Activated T-helper 1 cell treated with anti-CD3 and anti-CD28 coated beads, Interleukin-12 subunit alpha, Interleukin-12 subunit beta, Interleukin-2, Interleukin-4 antibody, amounts not matched to agents 30 ng/mL and 10 ng/mL and 1 ng/mL, durations not matched to agents 14 hours and 24 hours and 36 hours (primary cell): ENCODE measurements at regions of chr14 and their contacts with region 1.

Region 1: DNA sequence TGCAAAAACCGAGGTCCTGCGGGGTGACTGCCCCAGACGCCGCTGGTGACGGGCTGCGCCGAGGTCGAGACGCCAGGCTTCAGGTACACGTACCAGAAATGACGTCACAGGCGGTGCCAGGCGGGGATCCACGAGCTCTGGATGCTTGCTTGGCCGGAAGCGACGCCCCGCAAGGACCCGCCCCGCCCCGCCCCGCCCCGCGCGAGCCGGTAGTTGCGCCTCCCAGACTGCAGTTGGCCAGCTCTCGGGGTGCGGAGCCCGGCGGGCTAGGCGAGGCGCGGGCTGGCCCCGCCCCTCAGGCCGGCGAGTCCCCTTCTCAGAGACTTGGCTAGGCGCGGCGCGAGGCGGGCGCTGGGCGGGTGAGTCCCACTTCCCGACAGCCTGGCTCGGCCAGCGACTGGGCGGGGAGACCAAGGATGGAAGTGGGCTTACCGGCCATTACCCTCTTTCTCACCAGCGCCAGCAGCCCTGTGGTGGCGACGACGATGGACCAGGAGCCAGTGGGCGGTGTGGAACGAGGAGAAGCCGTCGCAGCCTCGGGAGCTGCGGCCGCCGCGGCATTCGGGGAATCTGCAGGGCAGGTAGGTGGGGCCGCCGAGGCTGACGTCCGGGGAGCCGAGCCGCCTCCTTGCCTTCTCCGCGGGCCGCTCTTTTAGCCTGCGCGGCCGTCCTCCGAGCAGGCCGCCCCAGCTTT is at the start of gene FAM177A1:
- DNase-seq: peak; percentile 96
- H3K4me3 Mint-ChIP-seq: peak within 1 kb of the TSS; percentile 97
- H3K27ac Mint-ChIP-seq: peak within 1 kb of the TSS; percentile 99
- H3K4me1 Mint-ChIP-seq: peaks cover 32% of the 10 kb centered on the region
- H3K27me3 Mint-ChIP-seq: no peaks in the 10 kb centered on the region
- total RNA-seq, gene FAM177A1: 43.2 and 46.3 TPM in 2 replicates

Region 2: DNA sequence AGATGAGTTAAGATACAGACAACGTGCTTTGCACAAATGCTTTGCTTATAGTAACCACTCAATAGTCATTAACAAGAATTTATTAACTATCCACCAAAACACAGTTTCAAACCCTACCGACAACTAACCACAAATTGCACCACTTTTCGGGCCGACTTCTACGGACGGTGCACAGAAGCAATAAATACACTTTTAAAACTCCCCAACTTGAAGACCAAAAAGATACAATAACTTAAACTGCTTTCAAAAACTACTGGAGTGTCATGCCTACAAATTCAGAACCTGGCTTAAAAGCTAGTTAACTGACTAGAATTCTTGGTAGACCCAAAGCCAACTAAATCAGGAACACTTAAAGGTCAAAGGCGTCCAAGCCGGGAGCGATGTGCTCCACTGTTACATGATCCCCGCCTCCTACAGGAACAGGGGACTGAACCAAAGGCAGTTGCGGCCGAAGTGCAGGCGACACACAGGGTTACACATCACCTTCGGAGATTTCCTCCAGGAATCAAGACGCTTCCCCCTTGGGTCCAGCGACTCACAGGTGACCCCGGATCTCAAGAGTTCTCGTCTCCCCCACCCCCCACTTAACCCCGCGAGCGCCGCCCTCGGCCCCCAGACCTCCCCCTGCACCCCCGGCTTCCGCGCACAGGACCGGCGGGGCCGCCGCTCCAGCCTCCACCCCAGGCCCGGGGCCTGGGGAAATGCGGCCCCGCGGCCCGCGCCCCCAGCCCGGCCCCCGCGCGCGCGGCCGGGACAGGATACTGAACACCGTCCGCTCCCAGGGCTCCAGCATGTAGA is 584.7 kb before region 1 on chr14:
- intact Hi-C with region 1: loop called (anchors 1 kb)
- DNase-seq: no peak
- H3K4me3 Mint-ChIP-seq: peak overlapping the region; percentile 90
- H3K27ac Mint-ChIP-seq: peak overlapping the region; percentile 91
- H3K4me1 Mint-ChIP-seq: peaks cover 28% of the 10 kb centered on the region
- H3K27me3 Mint-ChIP-seq: no peaks in the 10 kb centered on the region

Region 3: DNA sequence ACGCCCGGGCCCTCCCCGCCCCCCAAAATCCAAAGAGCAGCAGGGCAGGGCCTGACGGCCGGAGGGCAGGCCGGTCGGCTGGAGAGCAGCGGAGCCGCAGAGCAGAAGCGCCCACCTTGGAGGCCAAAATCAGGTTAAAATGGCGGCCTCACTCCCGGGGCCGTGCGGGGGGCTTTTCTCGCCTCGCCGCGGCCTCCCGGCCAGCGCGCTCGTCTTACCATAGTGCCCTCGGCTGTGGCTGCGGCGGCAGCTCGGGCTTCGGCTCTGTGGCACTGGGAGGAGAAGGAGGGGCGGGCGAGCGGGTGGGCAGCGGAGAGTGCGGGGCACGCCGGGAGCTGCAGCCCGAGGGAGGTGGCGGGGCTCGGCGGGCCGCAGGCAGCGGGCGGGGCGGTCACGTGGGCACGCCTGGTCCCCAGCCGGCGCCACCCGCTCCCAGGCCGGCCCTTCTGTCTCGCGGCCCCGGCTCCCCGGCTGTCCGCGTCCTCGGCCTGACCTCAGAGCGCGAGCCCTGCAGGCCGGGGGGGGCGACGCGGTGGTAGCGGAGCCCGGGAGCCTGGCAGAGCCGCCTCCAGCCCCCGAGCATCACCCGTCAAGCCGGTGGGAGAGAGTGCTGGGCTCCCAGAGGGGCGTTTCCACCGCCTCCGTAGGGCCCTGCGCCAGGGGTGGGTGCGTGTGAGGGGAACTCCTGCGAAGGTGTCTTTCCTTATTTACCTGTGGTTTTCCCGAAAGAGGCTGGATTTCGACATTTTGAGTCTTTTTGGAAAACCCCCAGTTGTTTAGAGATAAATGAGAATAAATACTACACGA is 331.7 kb before region 1 on chr14 and contains the start of gene CFL2:
- intact Hi-C with region 1: loop called (anchors 5 kb)
- DNase-seq: peak; percentile 51
- H3K4me3 Mint-ChIP-seq: peak within 1 kb of the TSS; percentile 95
- H3K27ac Mint-ChIP-seq: peak within 1 kb of the TSS; percentile 95
- H3K4me1 Mint-ChIP-seq: peaks cover 33% of the 10 kb centered on the region
- H3K27me3 Mint-ChIP-seq: peaks cover 9% of the 10 kb centered on the region
- total RNA-seq, gene CFL2: 8.3 and 9.2 TPM in 2 replicates

Region 4: DNA sequence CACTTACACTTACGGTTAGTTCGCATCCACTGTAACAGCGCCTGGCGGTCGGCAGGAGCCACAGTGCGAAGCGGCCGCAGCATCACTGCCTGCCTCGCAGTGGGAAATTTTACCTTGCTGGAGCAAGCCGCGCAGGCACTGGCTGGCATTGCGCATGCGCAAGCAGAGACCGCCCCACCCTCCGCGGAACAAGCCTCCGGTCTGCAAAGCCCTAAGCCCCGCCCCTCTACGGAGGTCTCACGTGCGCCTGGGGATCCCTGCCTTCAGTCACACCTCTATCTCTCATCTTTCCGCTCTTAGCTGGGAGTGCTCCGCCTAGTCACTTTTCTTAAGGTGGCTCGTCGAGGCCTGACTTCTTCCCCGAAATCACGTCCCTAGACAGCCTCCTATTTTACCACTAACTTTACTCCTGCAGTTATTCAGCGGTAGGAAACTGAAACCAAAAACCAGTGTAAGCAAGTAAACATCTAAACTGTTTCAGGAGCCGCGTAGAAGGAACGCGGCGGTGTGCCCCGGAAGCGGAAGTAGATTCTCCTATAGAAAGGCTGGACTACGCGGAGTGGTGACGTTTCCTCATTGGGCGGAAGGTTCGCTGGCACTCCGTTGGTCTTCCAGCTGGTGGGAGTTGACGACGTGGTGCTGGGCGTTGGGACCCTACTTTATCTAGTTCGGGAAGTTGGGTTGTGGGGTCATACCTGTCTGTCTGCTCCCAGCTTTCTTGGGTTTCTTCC is 63.6 kb before region 1 on chr14 and contains the start of gene SRP54:
- intact Hi-C with region 1: loop called (anchors 1 kb)
- DNase-seq: peak; percentile 100
- H3K4me3 Mint-ChIP-seq: no peak within 1 kb of the TSS
- H3K27ac Mint-ChIP-seq: no peak within 1 kb of the TSS
- H3K4me1 Mint-ChIP-seq: peaks cover 6% of the 10 kb centered on the region
- H3K27me3 Mint-ChIP-seq: no peaks in the 10 kb centered on the region
- total RNA-seq, gene SRP54: 76.1 and 76.2 TPM in 2 replicates

Region 5: GRCh38 chr14:35292051-35292769 is 246.0 kb after region 1 on chr14 and contains the start of gene PSMA6:
- intact Hi-C with region 1: loop called (anchors 1 kb)
- DNase-seq: peak; percentile 99
- H3K4me3 Mint-ChIP-seq: peak within 1 kb of the TSS; percentile 99
- H3K27ac Mint-ChIP-seq: peak within 1 kb of the TSS; percentile 94
- H3K4me1 Mint-ChIP-seq: peaks cover 56% of the 10 kb centered on the region
- H3K27me3 Mint-ChIP-seq: no peaks in the 10 kb centered on the region
- total RNA-seq, gene PSMA6: 475 and 479 TPM in 2 replicates

Region 6: DNA sequence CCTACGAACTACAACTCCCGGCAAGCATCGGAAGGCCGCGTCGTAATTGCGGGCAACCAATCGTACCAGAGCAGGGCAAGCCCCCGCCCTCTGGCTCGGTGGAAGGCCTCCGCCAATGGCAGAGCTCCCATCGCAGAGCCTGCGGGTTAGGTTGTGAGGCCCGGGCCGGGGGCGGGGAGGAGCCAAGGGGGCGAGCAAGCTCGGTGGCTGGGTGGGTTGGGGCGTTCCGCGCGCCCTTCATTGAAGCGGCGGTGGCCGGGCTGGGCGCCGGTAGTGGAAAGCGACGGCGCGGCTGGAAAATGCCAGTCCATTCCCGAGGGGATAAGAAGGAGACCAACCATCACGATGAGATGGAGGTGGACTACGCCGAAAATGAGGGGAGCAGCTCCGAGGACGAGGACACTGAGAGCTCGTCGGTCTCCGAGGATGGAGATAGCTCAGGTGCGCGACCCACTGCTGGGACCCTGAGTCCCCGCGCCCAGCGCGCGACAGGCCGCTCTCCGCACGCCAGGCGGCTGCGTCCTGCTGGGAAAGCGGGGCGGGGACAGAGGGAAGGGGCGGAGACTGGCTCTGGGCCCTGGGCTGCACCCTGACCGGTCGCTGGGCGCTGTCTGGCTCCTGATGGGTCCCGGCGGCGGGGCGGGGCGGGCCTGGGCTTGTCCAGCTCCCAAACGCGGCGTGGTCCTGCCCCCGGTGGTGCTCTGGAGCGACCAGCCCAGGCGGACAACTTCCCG is 780.2 kb after region 1 on chr14 and contains the start of gene BRMS1L:
- intact Hi-C with region 1: loop called (anchors 5 kb)
- DNase-seq: peak; percentile 96
- H3K4me3 Mint-ChIP-seq: peak within 1 kb of the TSS; percentile 88
- H3K27ac Mint-ChIP-seq: peak within 1 kb of the TSS; percentile 90
- H3K4me1 Mint-ChIP-seq: peaks cover 16% of the 10 kb centered on the region
- H3K27me3 Mint-ChIP-seq: peaks cover 4% of the 10 kb centered on the region
- total RNA-seq, gene BRMS1L: 6.3 and 9.1 TPM in 2 replicates